ENCODE measurements at regions of chr3 and their contacts with region 1.

Region 1: GRCh38 chr3:52983336-52983807 is 62.5 kb downstream of the SFMBT1 start:
- DNase-seq: peak; percentile 86
- ATAC-seq: peak; percentile 83
- H3K4me3 Mint-ChIP-seq: peak overlapping the region; percentile 55
- H3K27ac Mint-ChIP-seq: peak overlapping the region; percentile 95
- H3K4me1 Mint-ChIP-seq: peaks cover 44% of the 10 kb centered on the region
- H3K27me3 Mint-ChIP-seq: no peaks in the 10 kb centered on the region

Region 2: DNA sequence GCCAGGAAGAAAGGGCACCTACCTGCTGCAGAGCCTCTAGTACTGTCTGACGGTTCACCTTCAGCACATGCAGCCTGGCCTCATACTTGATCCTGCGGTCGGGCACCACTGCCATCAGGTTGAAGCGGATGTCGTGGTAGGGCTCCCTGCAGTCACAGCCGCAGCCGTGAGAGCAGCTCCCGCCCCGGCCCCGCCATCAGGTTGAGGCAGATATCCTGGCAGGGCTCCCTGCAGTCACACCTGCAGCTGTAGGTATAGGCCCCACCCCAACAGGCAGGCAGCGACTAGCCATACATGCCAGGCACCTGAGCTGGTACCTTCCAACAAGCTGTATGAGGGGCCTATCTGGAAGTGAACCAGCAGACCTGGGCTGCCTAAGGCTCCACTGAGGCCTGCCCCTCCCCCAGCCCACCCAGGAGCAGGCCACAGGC is 577.1 kb before region 1 on chr3:
- CTCF ChIA-PET with region 1: no interaction called
- POLR2A ChIA-PET with region 1: no interaction called
- intact Hi-C with region 1: no loop called
- DNase-seq: no peak
- ATAC-seq: no peak
- H3K4me3 Mint-ChIP-seq: no peak overlapping the region
- H3K27ac Mint-ChIP-seq: no peak overlapping the region
- H3K4me1 Mint-ChIP-seq: peaks cover 21% of the 10 kb centered on the region
- H3K27me3 Mint-ChIP-seq: no peaks in the 10 kb centered on the region

Region 3: DNA sequence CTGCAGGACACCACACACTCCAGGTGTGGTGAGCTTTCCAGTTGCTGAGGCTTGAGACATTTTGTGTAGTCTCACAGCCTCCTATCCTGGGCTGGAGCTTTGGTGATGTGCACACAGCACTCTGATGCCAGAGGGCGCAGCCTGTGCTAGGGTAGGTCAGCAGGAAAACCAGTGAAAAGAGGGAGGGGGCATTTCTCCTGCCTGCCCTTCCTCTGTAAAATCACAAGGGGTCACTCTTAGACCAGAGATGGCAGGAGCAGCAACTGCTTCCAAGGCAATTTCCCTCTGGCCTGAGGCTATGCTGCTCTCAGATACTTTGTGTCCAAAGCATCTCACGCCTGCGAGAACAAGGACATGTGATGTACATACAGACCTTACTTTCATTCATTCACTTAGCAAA is 132.0 kb before region 1 on chr3:
- CTCF ChIA-PET with region 1: no interaction called
- POLR2A ChIA-PET with region 1: no interaction called
- intact Hi-C with region 1: loop called in 1 of 2 experiments (anchors 5 kb)
- DNase-seq: peak; percentile 50
- ATAC-seq: peak; percentile 88
- H3K4me3 Mint-ChIP-seq: no peak overlapping the region
- H3K27ac Mint-ChIP-seq: no peak overlapping the region
- H3K4me1 Mint-ChIP-seq: no peaks in the 10 kb centered on the region
- H3K27me3 Mint-ChIP-seq: no peaks in the 10 kb centered on the region

Region 4: GRCh38 chr3:52865994-52866393 is 117.4 kb before region 1 on chr3:
- CTCF ChIA-PET with region 1: no interaction called
- POLR2A ChIA-PET with region 1: no interaction called
- intact Hi-C with region 1: no loop called
- DNase-seq: no peak
- ATAC-seq: no peak
- H3K4me3 Mint-ChIP-seq: no peak overlapping the region
- H3K27ac Mint-ChIP-seq: no peak overlapping the region
- H3K4me1 Mint-ChIP-seq: peaks cover 5% of the 10 kb centered on the region
- H3K27me3 Mint-ChIP-seq: no peaks in the 10 kb centered on the region

Region 5: GRCh38 chr3:52934630-52935530 is 48.5 kb before region 1 on chr3:
- CTCF ChIA-PET with region 1: interaction called, 3 read pairs
- POLR2A ChIA-PET with region 1: no interaction called
- intact Hi-C with region 1: loop called (anchors 1 to 2 kb)
- DNase-seq: peak; percentile 75
- ATAC-seq: peak; percentile 99
- H3K4me3 Mint-ChIP-seq: no peak overlapping the region
- H3K27ac Mint-ChIP-seq: no peak overlapping the region
- H3K4me1 Mint-ChIP-seq: peaks cover 12% of the 10 kb centered on the region
- H3K27me3 Mint-ChIP-seq: no peaks in the 10 kb centered on the region

Region 6: DNA sequence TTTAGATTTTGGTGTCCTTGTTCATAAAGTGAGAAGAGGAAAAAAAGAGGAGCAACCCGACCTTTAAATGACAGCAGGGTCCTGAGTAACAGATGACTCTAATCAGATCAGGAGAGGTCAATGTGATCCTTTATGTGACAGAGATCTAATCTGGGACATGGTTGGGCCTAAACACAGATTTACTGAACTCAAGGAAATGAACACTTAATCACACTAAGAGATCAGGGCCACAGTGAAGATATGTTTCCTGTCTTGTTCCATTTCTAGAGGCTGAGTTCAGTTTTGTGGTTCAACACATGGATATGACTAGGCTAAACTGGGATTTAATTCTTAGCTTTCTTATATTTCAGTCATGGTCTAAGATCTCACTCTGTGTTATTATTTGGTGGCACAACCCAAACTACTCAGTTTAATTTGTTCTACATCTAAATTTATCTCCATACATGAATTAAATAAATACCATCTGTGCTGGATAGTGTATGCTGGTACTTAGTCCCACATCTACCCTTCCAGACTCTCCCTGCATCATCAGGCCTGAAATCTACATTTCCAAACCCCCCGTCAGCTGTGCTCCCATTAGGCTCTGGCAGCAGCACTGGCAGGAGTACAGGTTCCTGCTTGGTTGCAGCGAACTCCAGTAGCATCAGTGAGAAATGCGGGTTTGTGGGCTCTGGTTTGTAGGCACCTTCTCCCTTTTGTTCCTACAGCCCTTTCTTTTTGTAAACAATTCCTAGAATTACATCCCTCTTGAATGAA is 39.9 kb after region 1 on chr3:
- CTCF ChIA-PET with region 1: interaction called, 3 read pairs
- POLR2A ChIA-PET with region 1: no interaction called
- intact Hi-C with region 1: loop called in 1 of 2 experiments (anchors 5 kb)
- DNase-seq: no peak
- ATAC-seq: peak; percentile 73
- H3K4me3 Mint-ChIP-seq: no peak overlapping the region
- H3K27ac Mint-ChIP-seq: peak overlapping the region; percentile 45
- H3K4me1 Mint-ChIP-seq: peaks cover 65% of the 10 kb centered on the region
- H3K27me3 Mint-ChIP-seq: no peaks in the 10 kb centered on the region

Region 7: GRCh38 chr3:53114011-53114400 is 130.6 kb after region 1 on chr3:
- CTCF ChIA-PET with region 1: no interaction called
- POLR2A ChIA-PET with region 1: no interaction called
- intact Hi-C with region 1: loop called in 1 of 2 experiments (anchors 1 kb)
- DNase-seq: peak; percentile 91
- ATAC-seq: peak; percentile 49
- H3K4me3 Mint-ChIP-seq: no peak overlapping the region
- H3K27ac Mint-ChIP-seq: no peak overlapping the region
- H3K4me1 Mint-ChIP-seq: peaks cover 15% of the 10 kb centered on the region
- H3K27me3 Mint-ChIP-seq: no peaks in the 10 kb centered on the region